Gastrocnemius medialis (tissue), 4 donors: ENCODE measurements at regions of chr19 and their contacts with region 1.

Region 1: DNA sequence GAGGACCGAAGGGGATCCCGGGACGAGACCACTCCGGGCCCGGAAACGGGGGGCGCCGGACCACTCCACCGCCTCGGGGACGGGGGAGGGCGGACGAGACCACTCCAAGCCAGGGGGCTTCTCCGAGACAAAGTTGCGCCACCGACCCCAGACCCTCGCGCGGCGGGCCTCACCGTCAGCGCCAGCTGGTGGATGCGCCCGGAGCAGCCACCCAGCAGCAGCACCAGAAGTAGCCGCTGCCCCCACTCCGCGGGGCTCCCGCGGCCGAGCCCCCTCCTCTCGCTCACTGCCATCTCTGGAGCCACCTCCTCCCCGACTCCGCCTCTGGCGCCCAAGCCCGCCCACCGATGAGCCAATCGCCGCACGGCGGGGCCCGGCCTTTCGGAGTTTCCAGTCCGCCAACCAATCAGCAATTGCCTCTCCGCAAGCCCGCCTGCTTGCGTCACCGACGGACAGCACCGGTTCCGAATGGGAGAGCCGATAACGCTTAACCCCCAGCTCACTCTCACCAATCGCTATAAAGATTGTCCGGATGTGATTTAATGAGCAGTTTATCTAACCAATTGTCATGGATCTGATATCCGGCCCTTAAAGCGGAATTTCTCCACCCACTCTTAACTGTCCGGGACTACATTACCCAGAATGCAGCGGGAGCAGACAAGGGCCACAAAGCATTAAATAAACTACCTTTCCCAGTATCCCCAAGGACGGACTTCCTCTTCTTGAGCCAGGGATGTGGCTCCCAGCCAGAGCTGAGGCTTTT is at the start of gene GPR108:
- DNase-seq: peak; percentile 100
- ATAC-seq: peak; percentile 82 to 88
- H3K4me3 ChIP-seq: peak within 1 kb of the TSS; percentile 83 to 98 (median 94)
- H3K27ac ChIP-seq: peak within 1 kb of the TSS; percentile 96 to 100 (median 98)
- H3K4me1 ChIP-seq: peaks cover 37 to 45% of the 10 kb centered on the region in 2 donors
- H3K27me3 ChIP-seq: no peaks in the 10 kb centered on the region
- CTCF ChIP-seq: peak in 1 of 5 experiments; percentile 8
- POLR2A ChIP-seq: peak; percentile 46 to 61
- total RNA-seq, gene GPR108: 22.6 to 40.3 (median 32.3) TPM

Region 2: DNA sequence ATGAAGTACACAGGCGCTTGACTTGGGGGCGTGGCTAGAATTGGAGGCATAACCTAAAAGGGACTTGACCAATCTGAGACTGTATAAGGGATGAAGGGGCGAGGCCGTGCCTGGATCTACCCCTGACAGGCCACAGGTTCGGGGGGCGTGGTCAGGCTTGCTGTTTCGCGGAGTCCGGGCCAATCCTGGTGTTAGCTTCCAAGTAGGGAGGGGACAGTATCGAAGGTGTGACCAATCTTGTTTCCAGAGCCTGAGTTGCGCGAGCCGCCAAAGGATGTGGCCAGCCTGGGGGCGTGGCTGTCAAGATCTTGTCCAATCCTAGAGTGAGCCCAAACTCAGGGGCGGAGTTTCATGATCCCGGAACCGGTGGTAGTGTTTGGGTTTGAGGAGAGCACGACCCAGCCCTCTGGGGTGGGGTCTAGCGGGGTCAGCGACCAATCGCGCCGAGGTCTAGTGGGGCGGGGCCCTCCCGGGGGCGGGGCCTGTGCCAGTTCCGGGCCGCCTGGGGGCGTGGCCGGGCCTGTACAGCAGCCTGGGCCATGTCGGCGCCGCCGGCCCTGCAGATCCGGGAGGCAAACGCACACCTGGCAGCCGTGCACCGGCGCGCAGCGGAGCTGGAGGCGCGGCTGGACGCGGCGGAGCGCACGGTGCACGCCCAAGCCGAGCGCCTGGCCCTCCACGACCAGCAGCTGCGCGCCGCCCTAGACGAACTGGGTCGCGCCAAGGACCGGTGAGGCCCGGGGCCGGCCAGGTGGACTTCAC is 832.9 kb before region 1 on chr19 and contains the start of gene VMAC:
- in situ Hi-C with region 1: no loop called
- intact Hi-C with region 1: loop called (anchors 10 kb)
- DNase-seq: peak; percentile 100
- ATAC-seq: peak; percentile 81 to 88
- H3K4me3 ChIP-seq: peak within 1 kb of the TSS; percentile 68 to 100 (median 97)
- H3K27ac ChIP-seq: peak within 1 kb of the TSS; percentile 93 to 98 (median 94)
- H3K4me1 ChIP-seq: peaks cover 10 to 20% of the 10 kb centered on the region in 2 donors
- H3K27me3 ChIP-seq: no peaks in the 10 kb centered on the region
- CTCF ChIP-seq: no peak
- POLR2A ChIP-seq: peak in 1 of 2 donors; percentile 5
- total RNA-seq, gene VMAC: 0.46 to 3.0 (median 2.1) TPM

Region 3: GRCh38 chr19:6393074-6393983 is 344.1 kb before region 1 on chr19 and contains the start of gene GTF2F1:
- in situ Hi-C with region 1: loop called in 1 of 4 experiments (anchors 25 kb)
- intact Hi-C with region 1: no loop called
- DNase-seq: peak; percentile 80 to 83
- ATAC-seq: peak; percentile 97
- H3K4me3 ChIP-seq: peak within 1 kb of the TSS; percentile 68 to 97 (median 90)
- H3K27ac ChIP-seq: peak within 1 kb of the TSS; percentile 83 to 93 (median 88)
- H3K4me1 ChIP-seq: peaks cover 6 to 15% of the 10 kb centered on the region in 2 donors
- H3K27me3 ChIP-seq: no peaks in the 10 kb centered on the region
- CTCF ChIP-seq: peak in 1 of 5 experiments; percentile 8
- POLR2A ChIP-seq: peak in 1 of 2 donors; percentile 18
- total RNA-seq, gene GTF2F1: 11.4 to 34.8 (median 22.4) TPM

Region 4: GRCh38 chr19:6516659-6517291 is 220.7 kb before region 1 on chr19:
- in situ Hi-C with region 1: loop called in 1 of 4 experiments (anchors 25 kb)
- intact Hi-C with region 1: loop called (anchors 2 kb)
- DNase-seq: peak; percentile 67 to 72
- ATAC-seq: peak; percentile 76 to 81
- H3K4me3 ChIP-seq: peak overlapping the region; percentile 63 to 82 (median 76)
- H3K27ac ChIP-seq: peak overlapping the region; percentile 64 to 82 (median 73)
- H3K4me1 ChIP-seq: peaks cover 0 to 2% of the 10 kb centered on the region in 2 donors
- H3K27me3 ChIP-seq: no peaks in the 10 kb centered on the region
- CTCF ChIP-seq: peak; percentile 74 to 97 (median 94)
- POLR2A ChIP-seq: no peak

Region 5: DNA sequence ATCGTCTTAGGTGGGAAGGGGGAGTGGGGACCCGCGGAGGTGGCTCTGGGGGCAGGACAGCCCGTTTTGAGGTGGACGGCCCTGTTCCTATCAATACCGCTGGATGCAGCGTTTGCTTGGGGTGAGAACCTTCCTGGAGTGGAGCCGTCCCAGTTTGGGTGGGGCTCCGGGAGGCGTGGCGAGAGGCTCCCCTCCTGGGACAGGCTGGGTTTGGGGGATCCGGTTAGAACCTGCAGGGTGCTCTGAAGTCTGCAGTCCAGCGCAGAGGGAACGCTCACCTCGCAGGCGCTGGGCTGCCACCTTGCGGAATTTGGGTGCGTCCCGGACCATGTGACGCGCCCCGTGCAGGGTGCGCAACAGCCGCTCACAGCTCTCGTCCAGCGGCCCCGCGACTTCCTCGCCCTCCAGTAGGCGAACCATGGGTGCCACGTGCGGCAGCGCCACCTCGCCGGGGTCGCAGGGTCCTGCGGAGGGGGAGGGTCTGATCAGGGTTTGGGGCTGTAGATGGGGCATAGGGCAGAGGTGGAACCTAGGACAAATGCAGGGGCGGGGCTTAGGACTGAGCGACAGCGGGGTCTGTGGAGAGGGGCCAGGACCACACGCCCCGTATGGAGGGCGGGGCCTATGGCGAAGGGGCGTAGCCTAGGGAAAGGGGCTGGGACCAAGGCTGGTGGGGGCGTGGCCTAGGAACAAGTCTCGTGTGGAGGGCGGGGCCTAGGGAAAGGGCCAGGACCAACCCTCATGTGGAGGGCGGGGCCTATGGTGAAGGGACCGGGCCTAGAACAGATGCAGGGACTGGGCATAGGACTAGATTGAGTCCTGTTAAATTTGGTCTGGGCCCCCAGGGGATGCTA is 15.9 kb after region 1 on chr19:
- in situ Hi-C with region 1: no loop called
- intact Hi-C with region 1: loop called (anchors 1 kb)
- DNase-seq: peak; percentile 74 to 87
- ATAC-seq: peak; percentile 84 to 90
- H3K4me3 ChIP-seq: peak overlapping the region; percentile 44 to 64 (median 57)
- H3K27ac ChIP-seq: peak overlapping the region; percentile 77 to 92 (median 89)
- H3K4me1 ChIP-seq: peaks cover 17 to 20% of the 10 kb centered on the region in 2 donors
- H3K27me3 ChIP-seq: no peaks in the 10 kb centered on the region
- CTCF ChIP-seq: peak; percentile 62 to 74 (median 69)
- POLR2A ChIP-seq: no peak

Region 6: DNA sequence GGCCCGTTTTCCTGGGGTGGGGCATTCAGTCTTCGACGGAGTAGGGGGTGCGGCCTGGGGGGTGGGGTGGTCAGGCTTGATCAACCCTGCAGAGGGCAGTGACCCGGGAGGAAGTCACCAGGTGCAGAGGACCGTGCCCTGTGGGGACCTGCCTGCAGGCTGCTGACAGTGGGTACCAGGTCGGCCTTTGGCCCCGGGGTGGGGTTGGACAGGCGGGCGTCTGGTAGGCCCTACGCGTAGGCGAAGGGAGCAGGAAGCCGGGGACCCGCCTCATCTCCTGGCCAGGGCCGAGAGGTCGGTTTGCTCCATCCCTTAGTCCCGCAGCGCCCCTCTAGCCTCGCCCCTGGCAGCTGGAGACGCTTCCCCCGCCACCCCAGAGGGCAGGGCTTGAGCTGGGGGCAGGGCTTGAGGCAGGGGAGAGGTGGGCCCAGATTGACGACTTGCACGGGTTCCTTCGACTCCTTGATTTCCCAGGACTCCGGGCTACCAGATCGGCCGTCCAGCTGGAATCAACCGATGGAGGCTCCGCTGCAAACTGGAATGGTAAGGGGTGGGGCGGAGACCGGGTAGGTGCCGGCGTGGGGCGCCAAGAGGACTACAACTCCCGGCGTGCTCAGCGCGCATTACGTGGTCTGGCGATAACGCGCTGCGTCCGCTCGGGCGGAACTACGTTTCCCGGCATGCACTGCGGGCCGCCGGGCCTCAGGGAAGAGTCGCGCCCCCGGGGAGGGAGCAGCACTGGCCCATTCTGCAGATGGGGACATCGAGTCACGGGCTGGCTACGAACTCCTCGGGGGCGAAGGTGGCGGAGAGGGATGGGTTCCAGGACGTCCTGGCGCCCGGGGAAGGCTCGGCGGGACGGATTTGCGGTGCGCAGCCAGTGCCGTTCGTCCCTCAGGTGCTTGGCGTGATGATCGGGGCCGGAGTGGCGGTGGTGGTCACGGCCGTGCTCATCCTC is 797.8 kb after region 1 on chr19 and contains the start of gene PNPLA6:
- in situ Hi-C with region 1: no loop called
- intact Hi-C with region 1: loop called (anchors 1 kb)
- DNase-seq: peak; percentile 88 to 93
- ATAC-seq: peak; percentile 82 to 84
- H3K4me3 ChIP-seq: peak within 1 kb of the TSS; percentile 88 to 92 (median 90)
- H3K27ac ChIP-seq: peak within 1 kb of the TSS; percentile 86 to 90 (median 88)
- H3K4me1 ChIP-seq: peaks cover 15 to 23% of the 10 kb centered on the region in 2 donors
- H3K27me3 ChIP-seq: no peaks in the 10 kb centered on the region
- CTCF ChIP-seq: no peak
- POLR2A ChIP-seq: peak; percentile 49 to 62
- total RNA-seq, gene PNPLA6: 61.4 to 101 (median 75.1) TPM